ENCODE measurements at regions of chr15 and their contacts with region 1.

Region 1: DNA sequence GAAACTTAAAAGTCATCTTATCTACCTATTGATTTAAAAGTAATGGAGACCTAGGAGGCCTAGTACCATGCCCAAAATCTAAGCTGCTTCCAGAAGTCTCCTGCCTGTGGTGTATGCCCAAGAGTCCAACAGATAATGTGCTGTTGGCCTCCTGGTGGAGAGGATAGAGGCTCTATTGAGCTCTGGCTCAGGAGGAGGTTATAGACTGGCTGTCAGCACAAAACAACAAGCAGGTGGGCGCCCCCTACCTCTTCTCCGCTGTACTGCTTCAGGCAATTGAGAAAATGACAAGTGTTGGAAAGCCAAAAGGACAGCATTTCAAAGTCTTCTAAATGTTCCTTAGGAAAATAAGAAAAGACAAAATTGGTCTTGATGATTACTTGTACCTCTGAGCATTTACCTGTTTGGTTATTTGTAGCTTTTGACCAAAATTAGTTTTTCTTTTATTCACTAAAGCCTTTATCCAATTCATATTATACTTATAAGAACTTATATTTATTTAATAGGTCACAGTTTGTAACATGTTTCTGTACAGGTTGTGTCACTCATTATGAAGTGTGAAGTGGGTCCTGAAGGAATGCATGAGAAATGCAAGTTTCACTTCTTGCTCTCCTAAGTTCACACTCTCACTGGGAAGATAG is 17.2 kb upstream of the GNB5 start:
- DNase-seq: peak; percentile 65 to 78 (median 70)
- ATAC-seq: peak; percentile 99
- H3K4me3 ChIP-seq: no peak overlapping the region
- H3K27ac ChIP-seq: no peak overlapping the region
- H3K4me1 ChIP-seq: no peaks in the 10 kb centered on the region
- H3K27me3 ChIP-seq: peaks cover 7 to 23% of the 10 kb centered on the region in 2 experiments; a peak in 3 of 5 replicates
- CTCF ChIP-seq: peak; percentile 90 to 96 (median 93)
- EP300 ChIP-seq: no peak
- POLR2A ChIP-seq: no peak
- RAD21 ChIP-seq: peak; percentile 60 to 76

Region 2: GRCh38 chr15:52163321-52164190 is 44.9 kb before region 1 on chr15:
- CTCF ChIA-PET with region 1: no interaction called
- POLR2A ChIA-PET with region 1: no interaction called
- in situ Hi-C with region 1: no loop called
- intact Hi-C with region 1: loop called (anchors 1 kb)
- DNase-seq: peak in 3 of 4 experiments; percentile 31 to 52 (median 37)
- ATAC-seq: peak; percentile 93
- H3K4me3 ChIP-seq: no peak overlapping the region
- H3K27ac ChIP-seq: no peak overlapping the region
- H3K4me1 ChIP-seq: peaks cover 0 to 6% of the 10 kb centered on the region in 2 experiments; a peak in 1 of 5 replicates
- H3K27me3 ChIP-seq: peaks cover 32 to 34% of the 10 kb centered on the region in 2 experiments
- CTCF ChIP-seq: peak; percentile 44 to 65 (median 44); a peak in 5 of 6 replicates
- EP300 ChIP-seq: no peak
- POLR2A ChIP-seq: no peak
- RAD21 ChIP-seq: peak; percentile 14 to 38; a peak in 3 of 4 replicates

Region 3: DNA sequence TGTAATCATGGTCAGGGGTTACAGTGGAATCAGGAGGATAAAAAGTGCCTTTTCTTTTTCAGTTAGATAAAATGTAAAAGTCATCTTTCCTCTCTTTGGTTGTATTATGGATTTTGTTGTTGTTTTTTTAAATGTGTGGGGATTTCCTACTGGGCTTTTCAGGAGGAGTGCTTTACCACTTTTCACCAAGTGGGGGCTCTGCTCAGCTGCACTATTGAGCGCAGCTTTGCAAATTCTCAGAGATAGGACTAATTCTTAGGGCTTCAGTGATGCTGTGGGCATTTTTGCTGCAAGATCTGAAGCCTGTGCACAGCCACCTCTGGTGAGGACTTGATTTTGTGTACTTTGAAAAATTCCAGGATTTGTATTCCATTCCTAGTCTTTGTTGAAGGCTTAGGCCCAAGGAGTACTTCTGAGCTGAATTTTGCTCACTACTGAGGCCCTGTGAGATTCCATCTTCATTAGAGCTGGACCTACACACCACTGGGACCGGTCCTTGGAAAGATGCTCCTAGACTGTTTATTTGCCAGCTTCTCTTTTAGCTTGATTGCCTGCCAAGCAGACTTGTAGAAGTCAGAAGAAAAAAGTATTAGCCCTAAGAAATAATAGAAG is 24.8 kb before region 1 on chr15:
- CTCF ChIA-PET with region 1: no interaction called
- POLR2A ChIA-PET with region 1: no interaction called
- in situ Hi-C with region 1: no loop called
- intact Hi-C with region 1: loop called (anchors 1 kb)
- DNase-seq: peak; percentile 33 to 51 (median 42)
- ATAC-seq: peak; percentile 45; the same call in 2 of the 3 replicates
- H3K4me3 ChIP-seq: no peak overlapping the region
- H3K27ac ChIP-seq: no peak overlapping the region
- H3K4me1 ChIP-seq: peaks cover 2 to 15% of the 10 kb centered on the region in 2 experiments; a peak in 3 of 5 replicates
- H3K27me3 ChIP-seq: peaks cover 20 to 38% of the 10 kb centered on the region in 2 experiments
- CTCF ChIP-seq: peak; percentile 70 to 71 (median 70)
- EP300 ChIP-seq: no peak
- POLR2A ChIP-seq: no peak
- RAD21 ChIP-seq: peak in 1 of 2 experiments; percentile 58; a peak in 2 of 4 replicates

Region 4: GRCh38 chr15:52417521-52417920 is 209.1 kb after region 1 on chr15:
- CTCF ChIA-PET with region 1: no interaction called
- POLR2A ChIA-PET with region 1: no interaction called
- in situ Hi-C with region 1: no loop called
- intact Hi-C with region 1: no loop called
- DNase-seq: no peak
- ATAC-seq: no peak
- H3K4me3 ChIP-seq: no peak overlapping the region
- H3K27ac ChIP-seq: no peak overlapping the region
- H3K4me1 ChIP-seq: no peaks in the 10 kb centered on the region
- H3K27me3 ChIP-seq: no peaks in the 10 kb centered on the region
- CTCF ChIP-seq: no peak
- EP300 ChIP-seq: no peak
- POLR2A ChIP-seq: no peak
- RAD21 ChIP-seq: no peak

Measured in K562 (cell line).